ENCODE measurements at regions of chr18 and their contacts with region 1.

Region 1: GRCh38 chr18:3604498-3605408 is 154.8 kb downstream of the TGIF1 start:
- DNase-seq: no peak
- H3K4me3 ChIP-seq: peak overlapping the region; percentile 54 to 69
- H3K27ac ChIP-seq: peak overlapping the region; percentile 94 to 95
- H3K4me1 ChIP-seq: peaks cover 7 to 24% of the 10 kb centered on the region in 2 donors
- H3K27me3 ChIP-seq: no peaks in the 10 kb centered on the region
- CTCF ChIP-seq: no peak

Region 2: DNA sequence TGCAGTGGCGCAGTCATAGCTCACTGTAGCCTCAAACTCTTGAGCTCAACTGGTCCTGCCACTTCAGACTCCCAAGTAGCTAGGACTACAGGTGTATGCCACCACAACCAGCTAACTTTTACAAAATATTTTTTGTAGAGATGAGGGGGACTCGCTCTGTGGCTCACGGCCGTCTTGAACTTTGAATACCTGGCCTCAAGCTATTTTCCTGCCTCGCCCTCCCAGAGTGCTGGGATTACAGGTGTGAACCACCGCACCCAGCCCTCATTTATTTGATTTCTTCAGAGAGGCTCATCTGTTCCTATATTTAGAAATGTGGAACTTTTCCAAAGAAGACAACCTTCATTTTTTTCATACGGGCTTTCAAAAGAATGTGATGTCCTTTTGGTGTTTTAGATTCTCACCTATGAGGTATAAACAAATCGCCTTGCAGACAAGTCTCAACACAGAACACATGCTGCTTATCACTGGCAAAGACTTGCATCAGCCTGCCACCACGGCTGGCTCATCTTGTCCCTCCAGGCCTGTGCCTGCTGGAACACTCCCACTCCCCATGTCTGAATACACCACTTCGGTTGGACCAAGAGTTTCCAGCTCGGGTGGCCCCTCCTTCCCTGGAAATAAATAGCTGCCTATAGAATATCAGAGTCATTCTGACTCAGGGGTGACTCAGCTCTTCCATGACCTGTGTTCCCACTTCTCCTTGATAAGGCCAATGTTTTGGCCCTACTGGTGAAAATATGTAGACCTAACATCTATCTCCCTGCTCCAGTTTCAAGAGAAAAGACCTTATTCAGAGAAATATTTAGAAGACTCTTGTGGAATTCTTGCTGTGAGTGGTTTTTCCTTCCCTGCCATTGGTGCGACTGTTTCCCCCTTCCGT is 47.9 kb after region 1 on chr18:
- intact Hi-C with region 1: loop called (anchors 2 kb)
- DNase-seq: peak; percentile 32 to 90
- H3K4me3 ChIP-seq: no peak overlapping the region
- H3K27ac ChIP-seq: peak overlapping the region; percentile 7 to 77
- H3K4me1 ChIP-seq: peaks cover 0 to 5% of the 10 kb centered on the region in 2 donors
- H3K27me3 ChIP-seq: no peaks in the 10 kb centered on the region
- CTCF ChIP-seq: no peak

Region 3: DNA sequence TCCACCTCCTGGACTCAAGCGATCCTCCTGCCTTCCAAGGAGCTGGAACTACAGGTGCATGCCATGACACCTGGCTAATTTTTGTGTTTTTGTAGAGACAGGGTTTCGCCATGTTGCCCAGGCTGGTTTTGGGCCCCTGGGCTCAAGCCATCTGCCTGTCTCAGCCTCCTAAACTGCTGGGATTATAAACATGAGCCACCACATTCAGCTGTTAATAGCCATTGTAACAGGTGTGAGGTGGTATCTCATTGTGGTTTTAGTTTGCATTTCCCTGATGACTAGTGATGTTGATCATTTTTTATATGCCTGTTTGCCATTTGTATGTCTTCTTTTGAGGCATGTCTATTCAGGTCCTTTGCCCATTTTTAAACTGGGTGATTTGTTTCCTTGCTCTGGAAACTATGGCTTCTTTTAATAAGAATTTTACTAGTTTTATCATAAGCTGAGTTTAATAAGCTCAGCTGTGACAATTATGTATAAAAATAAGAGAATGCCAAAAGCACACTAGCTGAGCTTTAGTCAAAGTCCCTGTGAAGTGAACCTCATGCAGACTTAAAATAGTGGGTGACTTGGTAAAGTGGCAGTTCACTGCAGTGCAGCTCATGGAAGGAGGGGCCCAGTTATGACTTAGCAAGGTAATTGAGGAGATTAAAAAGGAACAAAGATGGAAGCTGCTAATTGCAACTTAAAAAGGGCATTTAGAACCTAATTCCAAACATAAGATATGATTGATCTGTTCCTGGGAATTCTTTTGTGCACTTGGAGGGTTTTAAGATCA is 310.3 kb after region 1 on chr18:
- intact Hi-C with region 1: loop called (anchors 10 kb)
- DNase-seq: no peak
- H3K4me3 ChIP-seq: no peak overlapping the region
- H3K27ac ChIP-seq: no peak overlapping the region
- H3K4me1 ChIP-seq: peaks cover 0 to 17% of the 10 kb centered on the region in 2 donors
- H3K27me3 ChIP-seq: no peaks in the 10 kb centered on the region
- CTCF ChIP-seq: no peak

Region 4: GRCh38 chr18:3983351-3983969 is 378.7 kb after region 1 on chr18:
- intact Hi-C with region 1: no loop called
- DNase-seq: no peak
- H3K4me3 ChIP-seq: no peak overlapping the region
- H3K27ac ChIP-seq: no peak overlapping the region
- H3K4me1 ChIP-seq: peaks cover 0 to 4% of the 10 kb centered on the region in 2 donors
- H3K27me3 ChIP-seq: no peaks in the 10 kb centered on the region
- CTCF ChIP-seq: no peak